Activated CD8-positive, alpha-beta memory T cell treated with anti-CD3 and anti-CD28 coated beads, Interleukin-2, amount 10 ng/mL, durations not matched to agents 7 days and 5 days (primary cell): ENCODE measurements at regions of chr19 and their contacts with region 1.

Region 1: DNA sequence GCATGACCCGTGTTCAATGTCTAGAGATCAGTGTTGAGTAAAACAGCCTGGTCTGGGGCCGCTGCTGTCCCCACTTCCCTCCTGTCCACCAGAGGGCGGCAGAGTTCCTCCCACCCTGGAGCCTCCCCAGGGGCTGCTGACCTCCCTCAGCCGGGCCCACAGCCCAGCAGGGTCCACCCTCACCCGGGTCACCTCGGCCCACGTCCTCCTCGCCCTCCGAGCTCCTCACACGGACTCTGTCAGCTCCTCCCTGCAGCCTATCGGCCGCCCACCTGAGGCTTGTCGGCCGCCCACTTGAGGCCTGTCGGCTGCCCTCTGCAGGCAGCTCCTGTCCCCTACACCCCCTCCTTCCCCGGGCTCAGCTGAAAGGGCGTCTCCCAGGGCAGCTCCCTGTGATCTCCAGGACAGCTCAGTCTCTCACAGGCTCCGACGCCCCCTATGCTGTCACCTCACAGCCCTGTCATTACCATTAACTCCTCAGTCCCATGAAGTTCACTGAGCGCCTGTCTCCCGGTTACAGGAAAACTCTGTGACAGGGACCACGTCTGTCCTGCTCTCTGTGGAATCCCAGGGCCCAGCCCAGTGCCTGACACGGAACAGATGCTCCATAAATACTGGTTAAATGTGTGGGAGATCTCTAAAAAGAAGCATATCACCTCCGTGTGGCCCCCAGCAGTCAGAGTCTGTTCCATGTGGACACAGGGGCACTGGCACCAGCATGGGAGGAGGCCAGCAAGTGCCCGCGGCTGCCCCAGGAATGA is 1.5 kb upstream of the CEACAM5 start:
- DNase-seq: peak; percentile 77
- ATAC-seq: peak; percentile 94
- H3K4me3 Mint-ChIP-seq: peak overlapping the region; percentile 63
- H3K27ac Mint-ChIP-seq: peak overlapping the region; percentile 19
- H3K4me1 Mint-ChIP-seq: peaks cover 3% of the 10 kb centered on the region
- H3K27me3 Mint-ChIP-seq: peaks cover 19% of the 10 kb centered on the region

Region 2: DNA sequence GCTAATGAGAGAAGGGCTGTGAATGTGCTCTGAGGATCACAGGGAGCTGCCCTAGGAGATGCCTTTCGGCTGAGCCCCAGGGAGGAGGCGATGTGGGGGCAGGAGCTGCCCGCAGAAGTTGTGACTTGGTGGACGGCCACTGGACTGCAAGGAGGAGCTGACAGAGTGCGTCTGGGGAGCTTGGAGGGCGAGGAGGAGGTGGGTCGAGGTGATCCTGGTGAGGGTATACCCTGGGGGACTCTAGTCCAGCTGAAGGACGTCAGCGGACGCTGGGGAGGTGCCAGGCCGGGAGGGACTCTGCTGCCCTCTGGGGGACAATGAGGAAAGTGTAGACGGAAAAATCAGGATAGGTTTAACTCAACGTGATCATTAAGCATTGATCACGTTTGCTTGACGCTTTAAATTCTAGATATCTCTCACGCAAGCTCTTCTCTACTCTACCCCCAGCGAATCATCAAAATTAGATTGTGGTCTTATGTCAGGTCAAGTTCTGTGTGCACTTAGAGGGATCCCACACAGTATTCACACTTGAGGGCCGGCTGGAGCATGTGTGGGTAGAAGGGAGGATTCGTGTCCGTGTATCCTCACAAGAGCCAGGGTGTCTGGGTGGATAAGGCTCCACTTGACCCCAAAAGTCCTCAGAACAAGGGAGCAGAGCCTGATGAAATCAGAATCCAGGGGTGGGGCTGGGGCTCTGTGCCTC is 15.5 kb before region 1 on chr19:
- CTCF ChIA-PET with region 1: interaction called, 18 read pairs
- DNase-seq: no peak
- ATAC-seq: no peak
- H3K4me3 Mint-ChIP-seq: no peak overlapping the region
- H3K27ac Mint-ChIP-seq: no peak overlapping the region
- H3K4me1 Mint-ChIP-seq: no peaks in the 10 kb centered on the region
- H3K27me3 Mint-ChIP-seq: peaks cover 29% of the 10 kb centered on the region

Region 3: DNA sequence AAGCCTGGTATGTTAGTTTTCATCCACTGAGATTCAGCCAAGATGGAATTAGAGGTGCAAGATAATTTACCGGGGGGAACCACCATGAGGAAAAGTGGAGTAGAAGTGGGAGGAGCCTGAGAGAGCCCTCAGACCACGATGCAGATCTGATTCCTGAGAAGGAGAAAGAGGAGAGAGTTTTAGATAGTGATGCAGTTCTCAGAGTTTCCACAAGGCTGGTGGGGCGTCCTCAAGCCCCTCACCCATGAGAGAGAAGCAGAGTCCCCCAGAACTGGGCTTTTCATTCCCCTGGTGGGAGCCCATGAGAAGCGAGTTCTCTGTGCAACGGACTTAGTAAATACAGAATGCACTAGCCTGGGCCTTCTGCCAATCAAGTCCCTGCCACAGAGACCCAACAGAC is 19.6 kb after region 1 on chr19:
- CTCF ChIA-PET with region 1: interaction called, 15 read pairs
- DNase-seq: no peak
- ATAC-seq: no peak
- H3K4me3 Mint-ChIP-seq: no peak overlapping the region
- H3K27ac Mint-ChIP-seq: no peak overlapping the region
- H3K4me1 Mint-ChIP-seq: no peaks in the 10 kb centered on the region
- H3K27me3 Mint-ChIP-seq: peaks cover 56% of the 10 kb centered on the region

Region 4: GRCh38 chr19:41746593-41747227 is 39.8 kb after region 1 on chr19:
- CTCF ChIA-PET with region 1: interaction called, 27 read pairs
- DNase-seq: peak; percentile 60
- ATAC-seq: peak; percentile 66
- H3K4me3 Mint-ChIP-seq: no peak overlapping the region
- H3K27ac Mint-ChIP-seq: no peak overlapping the region
- H3K4me1 Mint-ChIP-seq: peaks cover 7% of the 10 kb centered on the region
- H3K27me3 Mint-ChIP-seq: peaks cover 54% of the 10 kb centered on the region

Region 5: DNA sequence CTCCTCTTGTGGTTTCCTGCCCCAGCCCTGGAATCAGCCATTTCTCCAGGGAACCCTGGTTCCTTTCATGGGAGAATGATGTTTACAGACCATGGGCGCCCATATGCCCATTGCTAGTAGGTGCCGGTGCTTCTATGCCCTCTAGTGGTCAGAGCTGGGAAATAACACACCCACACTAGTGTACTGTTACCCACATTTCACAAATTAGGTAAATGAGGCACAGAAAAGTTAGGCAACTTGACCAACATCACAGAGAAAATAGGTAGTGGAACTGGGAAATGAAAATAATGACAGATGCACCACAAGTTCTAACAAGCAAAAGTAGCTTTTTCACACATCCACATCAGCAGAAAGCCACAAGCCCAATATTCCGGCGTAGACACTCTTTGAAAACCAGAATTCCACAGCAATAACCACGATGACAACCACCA is 88.1 kb after region 1 on chr19:
- CTCF ChIA-PET with region 1: interaction called, 12 read pairs
- DNase-seq: peak; percentile 71
- ATAC-seq: peak; percentile 95
- H3K4me3 Mint-ChIP-seq: no peak overlapping the region
- H3K27ac Mint-ChIP-seq: no peak overlapping the region
- H3K4me1 Mint-ChIP-seq: no peaks in the 10 kb centered on the region
- H3K27me3 Mint-ChIP-seq: peaks cover 37% of the 10 kb centered on the region